Left cardiac atrium (tissue), 4 donors: ENCODE measurements at regions of chr7 and their contacts with region 1.

Region 1: DNA sequence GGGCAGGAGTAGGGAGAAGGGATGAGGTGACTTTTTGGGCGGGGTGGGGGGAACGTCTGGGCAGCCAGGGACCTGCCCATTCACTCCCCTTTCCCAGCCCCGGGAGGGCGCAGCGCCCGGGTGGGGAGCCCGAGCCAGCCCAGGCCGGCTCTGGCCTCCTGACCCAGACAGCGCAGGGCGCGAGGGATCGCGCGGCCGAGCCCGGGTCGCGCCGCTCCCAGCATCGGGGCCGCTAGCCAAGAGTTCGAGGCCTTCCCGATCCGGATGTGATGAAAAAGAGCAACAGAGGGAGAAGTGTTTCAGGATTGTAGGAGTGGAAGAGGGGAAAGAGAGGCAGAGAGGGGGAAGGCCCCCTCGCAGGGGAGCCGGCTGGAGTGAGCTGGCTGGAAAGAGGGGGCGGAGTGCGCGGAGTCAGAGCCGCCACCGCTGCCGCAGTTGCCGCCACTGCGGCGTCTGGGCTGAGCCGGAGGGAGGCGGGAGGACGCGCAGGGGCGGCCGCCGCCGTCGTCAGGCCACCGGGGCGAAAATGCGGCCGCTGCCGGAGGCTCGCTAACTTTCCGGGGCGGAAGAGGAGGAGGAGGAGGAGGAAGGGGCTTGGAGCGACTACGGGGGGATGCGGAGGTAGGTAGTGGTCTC is at the start of gene MDFIC:
- DNase-seq: peak; percentile 74
- ATAC-seq: peak; percentile 88 to 92
- total RNA-seq, gene MDFIC: 21.8 to 23.9 TPM

Region 2: DNA sequence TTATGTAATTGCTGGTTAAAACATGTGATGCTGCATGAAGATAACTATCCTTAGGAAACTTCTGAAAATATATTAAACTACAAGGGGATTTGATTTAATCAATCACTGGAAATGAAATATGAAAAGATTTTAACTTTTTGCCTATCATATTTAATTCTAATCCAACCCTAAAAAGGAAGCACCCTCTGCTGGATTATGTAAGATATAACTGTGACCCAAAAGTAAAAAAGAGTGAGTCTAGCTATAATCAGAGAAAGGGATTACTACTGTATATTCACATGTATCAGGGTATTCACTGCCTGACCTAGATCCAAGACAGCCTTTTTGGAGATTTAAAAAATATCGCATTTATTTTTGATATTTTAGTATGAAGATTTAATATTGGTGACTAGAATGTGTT is 295.2 kb after region 1 on chr7:
- intact Hi-C with region 1: loop called in 1 of 2 experiments (anchors 10 kb)
- DNase-seq: no peak
- ATAC-seq: peak in 1 of 2 donors; percentile 54

Region 3: DNA sequence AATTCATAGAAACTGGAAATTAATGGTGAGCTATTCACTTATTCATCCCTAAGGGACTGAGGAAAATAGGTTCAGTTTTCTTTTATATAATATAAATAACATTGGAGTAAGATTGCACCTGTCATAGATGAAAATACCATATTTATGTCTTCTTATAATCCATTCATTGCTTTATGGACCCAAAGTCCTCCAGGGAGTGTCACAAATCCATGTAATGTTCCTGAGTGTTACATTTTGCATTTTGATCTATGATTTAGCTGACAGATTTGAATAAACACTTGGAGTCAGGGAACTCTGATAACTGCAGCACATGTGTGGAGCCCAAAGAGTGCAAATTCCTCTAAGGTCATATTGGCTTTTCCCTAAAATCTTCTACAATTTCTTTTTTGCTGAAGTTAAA is 484.1 kb after region 1 on chr7:
- intact Hi-C with region 1: no loop called
- DNase-seq: no peak
- ATAC-seq: no peak